Naive thymus-derived CD4-positive, alpha-beta T cell (primary cell): ENCODE measurements at regions of chr5 and their contacts with region 1.

Region 1: DNA sequence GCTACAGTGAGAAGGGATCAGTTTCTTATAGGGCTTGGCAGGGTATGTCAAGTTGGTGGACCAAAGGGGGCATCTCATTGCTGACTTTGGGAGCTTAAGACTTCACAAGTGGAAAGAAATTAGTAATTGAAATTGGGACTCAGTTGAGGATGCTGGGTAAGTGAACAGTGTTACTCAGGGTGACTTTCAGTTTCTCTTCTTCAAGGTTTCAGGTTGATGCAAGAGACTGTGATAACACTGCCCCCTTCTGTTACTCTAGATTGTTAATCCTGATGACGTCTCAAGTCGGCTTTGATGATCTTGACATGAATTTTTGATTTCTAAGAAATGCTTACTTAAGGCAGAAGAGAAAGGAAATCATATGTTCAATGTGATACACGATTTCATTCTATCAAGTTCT is 21.3 kb downstream of the KCTD16 start:
- DNase-seq: peak in 7 of 9 donors; percentile 72 to 88 (median 85)
- ATAC-seq: peak; percentile 73
- H3K4me3 ChIP-seq: peak overlapping the region; percentile 2
- H3K4me3 Mint-ChIP-seq: no peak overlapping the region
- H3K27ac ChIP-seq: peak overlapping the region; percentile 67
- H3K27ac Mint-ChIP-seq: no peak overlapping the region
- H3K4me1 ChIP-seq: peaks cover 50 to 51% of the 10 kb centered on the region in 2 donors
- H3K4me1 Mint-ChIP-seq: peaks cover 22 to 45% (median 23%) of the 10 kb centered on the region in 7 donors
- H3K27me3 ChIP-seq: no peaks in the 10 kb centered on the region
- H3K27me3 Mint-ChIP-seq: peaks cover 0 to 2% (median 0%) of the 10 kb centered on the region in 5 donors

Region 2: GRCh38 chr5:142748568-142749249 is 1443.3 kb before region 1 on chr5:
- CTCF ChIA-PET with region 1: no interaction called
- POLR2A ChIA-PET with region 1: no interaction called
- intact Hi-C with region 1: loop called in 1 of 2 experiments (anchors 1 kb)
- DNase-seq: peak in 8 of 9 donors; percentile 13 to 67 (median 54)
- ATAC-seq: peak; percentile 67
- H3K4me3 ChIP-seq: no peak overlapping the region
- H3K4me3 Mint-ChIP-seq: no peak overlapping the region
- H3K27ac ChIP-seq: no peak overlapping the region
- H3K27ac Mint-ChIP-seq: no peak overlapping the region
- H3K4me1 ChIP-seq: no peaks in the 10 kb centered on the region
- H3K4me1 Mint-ChIP-seq: peaks cover 0 to 17% (median 0%) of the 10 kb centered on the region in 7 donors
- H3K27me3 ChIP-seq: no peaks in the 10 kb centered on the region
- H3K27me3 Mint-ChIP-seq: peaks cover 0 to 14% (median 0%) of the 10 kb centered on the region in 5 donors

Region 3: GRCh38 chr5:143182901-143183820 is 1008.8 kb before region 1 on chr5:
- CTCF ChIA-PET with region 1: no interaction called
- POLR2A ChIA-PET with region 1: no interaction called
- intact Hi-C with region 1: loop called in 1 of 2 experiments (anchors 5 kb)
- DNase-seq: peak in 1 of 9 donors; percentile 80
- ATAC-seq: peak; percentile 61
- H3K4me3 ChIP-seq: no peak overlapping the region
- H3K4me3 Mint-ChIP-seq: peak overlapping the region in 1 of 10 donors; percentile 66
- H3K27ac ChIP-seq: no peak overlapping the region
- H3K27ac Mint-ChIP-seq: peak overlapping the region in 1 of 9 donors; percentile 89
- H3K4me1 ChIP-seq: peaks cover 3 to 22% of the 10 kb centered on the region in 2 donors
- H3K4me1 Mint-ChIP-seq: peaks cover 6 to 65% (median 16%) of the 10 kb centered on the region in 7 donors
- H3K27me3 ChIP-seq: no peaks in the 10 kb centered on the region
- H3K27me3 Mint-ChIP-seq: no peaks in the 10 kb centered on the region

Region 4: GRCh38 chr5:143403593-143404415 is 788.2 kb before region 1 on chr5 and contains the start of gene NR3C1:
- CTCF ChIA-PET with region 1: interaction called, 5 read pairs
- POLR2A ChIA-PET with region 1: interaction called, 50 read pairs
- intact Hi-C with region 1: loop called (anchors 1 kb)
- DNase-seq: peak; percentile 83 to 92 (median 90)
- ATAC-seq: peak; percentile 85
- H3K4me3 ChIP-seq: peak within 1 kb of the TSS; percentile 98
- H3K4me3 Mint-ChIP-seq: peak within 1 kb of the TSS; percentile 93 to 99 (median 96)
- H3K27ac ChIP-seq: peak within 1 kb of the TSS; percentile 91
- H3K27ac Mint-ChIP-seq: peak within 1 kb of the TSS; percentile 98 to 100 (median 99)
- H3K4me1 ChIP-seq: peaks cover 17 to 29% of the 10 kb centered on the region in 2 donors
- H3K4me1 Mint-ChIP-seq: peaks cover 30 to 48% (median 40%) of the 10 kb centered on the region in 7 donors
- H3K27me3 ChIP-seq: no peaks in the 10 kb centered on the region
- H3K27me3 Mint-ChIP-seq: peaks cover 0 to 2% (median 0%) of the 10 kb centered on the region in 5 donors
- total RNA-seq, gene NR3C1: 68.0 to 140 (median 121) TPM

Region 5: GRCh38 chr5:143824851-143825720 is 366.9 kb before region 1 on chr5:
- CTCF ChIA-PET with region 1: interaction called, 4 read pairs
- POLR2A ChIA-PET with region 1: no interaction called
- intact Hi-C with region 1: loop called (anchors 1 kb)
- DNase-seq: peak; percentile 56 to 86 (median 75)
- ATAC-seq: peak; percentile 94
- H3K4me3 ChIP-seq: no peak overlapping the region
- H3K4me3 Mint-ChIP-seq: no peak overlapping the region
- H3K27ac ChIP-seq: no peak overlapping the region
- H3K27ac Mint-ChIP-seq: no peak overlapping the region
- H3K4me1 ChIP-seq: peaks cover 0 to 6% of the 10 kb centered on the region in 2 donors
- H3K4me1 Mint-ChIP-seq: peaks cover 0 to 18% (median 10%) of the 10 kb centered on the region in 7 donors
- H3K27me3 ChIP-seq: no peaks in the 10 kb centered on the region
- H3K27me3 Mint-ChIP-seq: peaks cover 0 to 5% (median 3%) of the 10 kb centered on the region in 5 donors

Region 6: DNA sequence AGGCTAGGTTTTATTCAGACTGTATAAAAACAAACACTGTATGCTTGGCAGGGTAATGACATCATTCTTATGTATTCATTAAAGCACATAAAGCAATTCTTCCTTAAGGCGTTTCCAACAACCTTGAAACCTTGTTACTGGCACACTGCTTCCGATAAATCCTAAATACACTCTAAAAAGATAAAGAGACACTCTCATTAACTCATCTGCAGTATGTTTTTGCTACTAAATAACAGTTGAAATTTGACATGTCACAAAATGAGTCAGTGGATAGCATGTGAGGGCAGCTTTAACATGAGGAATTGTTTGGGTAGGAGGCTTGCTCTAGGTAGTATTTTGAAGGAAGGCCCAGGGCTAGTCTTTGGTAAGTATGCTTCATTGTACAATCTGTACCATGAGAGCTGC is 35.2 kb before region 1 on chr5:
- CTCF ChIA-PET with region 1: interaction called, 3 read pairs
- POLR2A ChIA-PET with region 1: interaction called, 3 read pairs
- intact Hi-C with region 1: loop called in 1 of 2 experiments (anchors 1 kb)
- DNase-seq: no peak
- ATAC-seq: no peak
- H3K4me3 ChIP-seq: no peak overlapping the region
- H3K4me3 Mint-ChIP-seq: no peak overlapping the region
- H3K27ac ChIP-seq: no peak overlapping the region
- H3K27ac Mint-ChIP-seq: peak overlapping the region in 6 of 9 donors; percentile 13 to 74 (median 50)
- H3K4me1 ChIP-seq: no peaks in the 10 kb centered on the region
- H3K4me1 Mint-ChIP-seq: peaks cover 0 to 5% (median 0%) of the 10 kb centered on the region in 7 donors
- H3K27me3 ChIP-seq: no peaks in the 10 kb centered on the region
- H3K27me3 Mint-ChIP-seq: no peaks in the 10 kb centered on the region